IMR-90 (cell line): ENCODE measurements at regions of chr4 and their contacts with region 1.

Region 1: DNA sequence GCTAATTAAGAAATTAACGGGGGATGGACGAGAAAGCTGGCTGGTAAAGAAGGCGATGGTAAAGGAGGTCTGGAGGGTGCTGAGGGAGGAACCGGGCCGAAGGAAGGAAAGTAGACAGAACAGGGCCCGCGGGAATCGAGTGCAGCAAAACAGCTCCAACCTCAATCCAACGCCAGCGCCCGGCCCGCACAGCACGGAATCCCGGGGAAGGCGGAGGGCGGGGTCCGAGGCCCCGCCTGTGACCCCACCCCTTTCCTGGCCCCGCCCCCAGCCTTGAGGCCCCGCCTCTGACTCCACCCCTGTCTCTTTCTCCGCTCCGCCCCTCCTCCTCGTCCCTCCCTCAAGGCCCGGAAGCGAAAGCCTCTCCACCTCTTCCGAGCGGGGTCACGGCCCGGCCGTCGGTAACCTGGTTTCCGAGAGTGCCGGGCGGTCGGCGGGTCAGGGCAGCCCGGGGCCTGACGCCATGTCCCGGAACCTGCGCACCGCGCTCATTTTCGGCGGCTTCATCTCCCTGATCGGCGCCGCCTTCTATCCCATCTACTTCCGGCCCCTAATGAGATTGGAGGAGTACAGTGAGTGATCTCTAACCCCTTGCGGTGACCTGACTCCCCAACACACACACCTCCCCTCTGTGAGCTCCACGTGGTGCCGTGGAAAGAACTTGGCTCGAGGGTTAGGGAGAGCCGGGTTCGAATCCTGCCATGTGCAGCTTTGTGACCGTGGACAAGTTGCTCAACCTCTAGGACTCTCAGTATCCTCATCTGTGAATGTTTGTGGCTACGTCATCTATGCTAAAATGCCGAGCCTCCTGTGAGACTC is at the start of gene SMIM20:
- DNase-seq: peak; percentile 86
- ATAC-seq: peak; percentile 98
- H3K4me3 ChIP-seq: peak within 1 kb of the TSS; percentile 54
- H3K27ac ChIP-seq: peak within 1 kb of the TSS; percentile 78
- H3K4me1 ChIP-seq: peaks cover 6% of the 10 kb centered on the region
- H3K27me3 ChIP-seq: no peaks in the 10 kb centered on the region
- CTCF ChIP-seq: no peak
- POLR2A ChIP-seq: peak; percentile 70; the same call in 1 of the 2 replicates
- RAD21 ChIP-seq: no peak
- total RNA-seq, gene SMIM20: 13.6 and 24.4 TPM in 2 replicates

Region 2: GRCh38 chr4:25814301-25815136 is 99.5 kb before region 1 on chr4:
- CTCF ChIA-PET with region 1: no interaction called
- POLR2A ChIA-PET with region 1: no interaction called
- dilution Hi-C with region 1: no loop called
- in situ Hi-C with region 1: no loop called
- intact Hi-C with region 1: loop called (anchors 5 kb)
- DNase-seq: peak; percentile 63
- ATAC-seq: peak; percentile 21
- H3K4me3 ChIP-seq: no peak overlapping the region
- H3K27ac ChIP-seq: peak overlapping the region; percentile 37; the same call in 1 of the 2 replicates
- H3K4me1 ChIP-seq: peaks cover 37% of the 10 kb centered on the region
- H3K27me3 ChIP-seq: no peaks in the 10 kb centered on the region
- CTCF ChIP-seq: no peak
- POLR2A ChIP-seq: no peak
- RAD21 ChIP-seq: no peak

Region 3: GRCh38 chr4:25862411-25863346 is 51.4 kb before region 1 on chr4 and contains the start of gene SEL1L3:
- CTCF ChIA-PET with region 1: no interaction called
- POLR2A ChIA-PET with region 1: no interaction called
- dilution Hi-C with region 1: no loop called
- in situ Hi-C with region 1: no loop called
- intact Hi-C with region 1: loop called (anchors 5 kb)
- DNase-seq: no peak
- ATAC-seq: peak; percentile 62
- H3K4me3 ChIP-seq: peak within 1 kb of the TSS; percentile 49
- H3K27ac ChIP-seq: peak within 1 kb of the TSS; percentile 19
- H3K4me1 ChIP-seq: peaks cover 2% of the 10 kb centered on the region; the same call in 1 of the 2 replicates
- H3K27me3 ChIP-seq: no peaks in the 10 kb centered on the region
- CTCF ChIP-seq: no peak
- POLR2A ChIP-seq: no peak; the same call in 1 of the 2 replicates
- RAD21 ChIP-seq: no peak
- total RNA-seq, gene SEL1L3: 31.7 and 43.7 TPM in 2 replicates

Region 4: GRCh38 chr4:26028793-26029567 is 114.9 kb after region 1 on chr4:
- CTCF ChIA-PET with region 1: no interaction called
- POLR2A ChIA-PET with region 1: no interaction called
- dilution Hi-C with region 1: no loop called
- in situ Hi-C with region 1: no loop called
- intact Hi-C with region 1: no loop called
- DNase-seq: peak; percentile 58
- ATAC-seq: peak; percentile 79
- H3K4me3 ChIP-seq: no peak overlapping the region
- H3K27ac ChIP-seq: no peak overlapping the region
- H3K4me1 ChIP-seq: peaks cover 19% of the 10 kb centered on the region
- H3K27me3 ChIP-seq: peaks cover 3% of the 10 kb centered on the region
- CTCF ChIP-seq: peak; percentile 77
- POLR2A ChIP-seq: no peak
- RAD21 ChIP-seq: peak; percentile 93

Region 5: GRCh38 chr4:26048378-26048882 is 134.4 kb after region 1 on chr4:
- CTCF ChIA-PET with region 1: no interaction called
- POLR2A ChIA-PET with region 1: no interaction called
- dilution Hi-C with region 1: no loop called
- in situ Hi-C with region 1: no loop called
- intact Hi-C with region 1: no loop called
- DNase-seq: peak; percentile 92
- ATAC-seq: peak; percentile 94
- H3K4me3 ChIP-seq: no peak overlapping the region
- H3K27ac ChIP-seq: peak overlapping the region; percentile 90
- H3K4me1 ChIP-seq: peaks cover 25% of the 10 kb centered on the region
- H3K27me3 ChIP-seq: no peaks in the 10 kb centered on the region
- CTCF ChIP-seq: no peak
- POLR2A ChIP-seq: no peak
- RAD21 ChIP-seq: no peak

Region 6: DNA sequence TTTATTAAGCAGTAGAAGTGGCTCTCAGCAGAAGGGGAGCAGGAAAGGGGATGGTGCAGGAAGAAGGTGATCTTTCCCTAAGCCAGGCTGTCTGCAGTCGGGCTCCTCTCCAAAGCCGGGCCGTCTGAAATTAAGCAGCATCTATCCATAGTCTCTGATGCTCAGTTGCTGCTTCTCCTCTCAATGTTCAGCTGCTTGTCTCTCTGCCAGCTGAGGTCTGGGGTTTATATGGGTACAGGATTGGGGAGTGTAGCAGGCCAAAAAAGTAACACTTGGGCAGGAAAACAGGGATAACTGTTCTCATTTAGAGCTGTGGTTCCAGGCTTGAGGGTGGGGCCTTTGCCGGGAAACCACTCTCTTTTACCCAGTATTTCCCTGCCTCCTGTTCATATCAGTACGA is 615.4 kb after region 1 on chr4:
- CTCF ChIA-PET with region 1: no interaction called
- POLR2A ChIA-PET with region 1: no interaction called
- dilution Hi-C with region 1: no loop called
- in situ Hi-C with region 1: no loop called
- intact Hi-C with region 1: no loop called
- DNase-seq: no peak
- ATAC-seq: no peak
- H3K4me3 ChIP-seq: no peak overlapping the region
- H3K27ac ChIP-seq: no peak overlapping the region
- H3K4me1 ChIP-seq: peaks cover 5% of the 10 kb centered on the region
- H3K27me3 ChIP-seq: no peaks in the 10 kb centered on the region
- CTCF ChIP-seq: no peak
- POLR2A ChIP-seq: no peak
- RAD21 ChIP-seq: no peak